Activated T-helper 1 cell treated with anti-CD3 and anti-CD28 coated beads, Interleukin-12 subunit alpha, Interleukin-12 subunit beta, Interleukin-2, Interleukin-4 antibody, amounts not matched to agents 30 ng/mL and 10 ng/mL and 1 ng/mL, durations not matched to agents 14 hours and 24 hours and 36 hours (primary cell): ENCODE measurements at regions of chr19 and their contacts with region 1.

Region 1: DNA sequence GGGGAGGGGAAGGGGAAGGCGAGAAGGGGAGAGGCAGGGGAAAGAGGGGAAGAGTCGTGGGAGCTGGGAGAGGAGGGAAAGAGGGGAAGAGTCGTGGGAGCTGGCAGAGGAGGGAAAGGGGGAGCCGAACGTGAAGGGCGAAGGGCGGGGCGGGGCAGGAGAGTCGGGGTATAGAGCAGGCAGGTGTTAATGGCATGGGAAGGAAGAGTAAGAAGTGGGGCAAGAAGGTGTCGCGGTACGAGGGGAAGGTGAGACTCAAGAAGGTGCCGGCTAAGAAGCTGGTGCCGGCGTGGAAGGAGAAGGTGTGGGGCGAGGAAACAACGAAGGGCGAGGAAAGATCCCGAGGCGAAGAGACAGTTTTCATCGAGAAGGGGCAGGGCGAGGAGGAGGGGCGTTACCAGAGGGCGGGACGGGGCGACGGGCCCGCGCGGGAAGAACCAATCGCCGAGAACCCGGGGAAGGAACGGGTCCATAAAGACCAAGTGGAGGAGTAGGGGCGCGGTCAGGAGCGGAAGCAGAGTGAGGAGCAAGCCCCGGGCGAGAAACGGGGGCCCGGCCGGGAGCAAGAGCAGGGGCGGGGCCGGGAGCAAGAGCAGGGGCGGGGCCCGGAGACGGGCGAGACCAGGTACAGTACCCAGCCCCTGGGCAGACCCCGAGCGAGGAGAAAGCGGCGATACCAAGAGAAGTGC is 463 bp downstream of the CATSPERG start:
- DNase-seq: peak; percentile 94
- H3K4me3 Mint-ChIP-seq: peak overlapping the region; percentile 94
- H3K27ac Mint-ChIP-seq: peak overlapping the region; percentile 99
- H3K4me1 Mint-ChIP-seq: peaks cover 6% of the 10 kb centered on the region
- H3K27me3 Mint-ChIP-seq: no peaks in the 10 kb centered on the region

Region 2: DNA sequence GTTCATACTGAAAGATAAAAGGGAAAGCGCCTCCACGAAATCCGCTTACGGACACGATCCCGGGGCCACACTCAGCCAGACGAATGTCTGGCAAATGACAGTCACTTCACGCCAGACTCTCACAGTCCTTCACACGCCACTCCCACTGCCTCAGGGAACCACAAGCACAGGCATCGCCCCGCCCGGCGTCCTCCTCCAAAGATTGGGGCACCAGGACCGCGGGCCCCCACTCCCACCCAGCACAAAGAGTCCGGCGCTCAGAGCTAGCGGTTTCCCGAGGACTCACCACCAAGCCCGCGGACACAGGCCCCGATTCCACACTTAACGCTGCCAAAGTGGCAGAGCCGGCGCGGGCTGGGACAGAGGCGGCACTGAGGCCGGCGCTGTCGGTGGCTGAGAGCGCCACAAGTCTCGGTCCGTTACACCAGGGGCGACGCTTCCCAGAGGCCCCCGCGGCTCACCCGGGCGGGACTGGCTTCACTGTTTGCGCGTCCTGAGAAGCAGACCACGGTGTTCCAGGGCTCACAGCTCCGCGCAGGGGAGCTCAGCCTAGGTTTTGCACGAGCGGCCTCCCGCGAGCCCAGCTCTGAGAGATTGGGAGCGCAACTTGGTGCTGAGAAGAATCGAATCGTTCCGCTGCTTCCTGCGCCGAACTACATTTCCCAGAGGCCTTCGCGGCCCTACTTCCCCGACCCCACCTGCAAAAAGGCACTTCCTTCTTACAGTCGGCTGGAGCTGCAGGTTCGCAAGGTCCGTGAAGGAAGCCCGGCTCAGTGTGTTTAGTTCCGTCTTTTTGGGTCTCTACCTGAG is 869.1 kb before region 1 on chr19 and contains the start of gene ZNF569:
- intact Hi-C with region 1: loop called (anchors 10 kb)
- DNase-seq: peak; percentile 85
- H3K4me3 Mint-ChIP-seq: peak within 1 kb of the TSS; percentile 92
- H3K27ac Mint-ChIP-seq: peak within 1 kb of the TSS; percentile 93
- H3K4me1 Mint-ChIP-seq: peaks cover 27% of the 10 kb centered on the region
- H3K27me3 Mint-ChIP-seq: no peaks in the 10 kb centered on the region
- total RNA-seq, gene ZNF569: 2.7 and 3.7 TPM in 2 replicates

Region 3: DNA sequence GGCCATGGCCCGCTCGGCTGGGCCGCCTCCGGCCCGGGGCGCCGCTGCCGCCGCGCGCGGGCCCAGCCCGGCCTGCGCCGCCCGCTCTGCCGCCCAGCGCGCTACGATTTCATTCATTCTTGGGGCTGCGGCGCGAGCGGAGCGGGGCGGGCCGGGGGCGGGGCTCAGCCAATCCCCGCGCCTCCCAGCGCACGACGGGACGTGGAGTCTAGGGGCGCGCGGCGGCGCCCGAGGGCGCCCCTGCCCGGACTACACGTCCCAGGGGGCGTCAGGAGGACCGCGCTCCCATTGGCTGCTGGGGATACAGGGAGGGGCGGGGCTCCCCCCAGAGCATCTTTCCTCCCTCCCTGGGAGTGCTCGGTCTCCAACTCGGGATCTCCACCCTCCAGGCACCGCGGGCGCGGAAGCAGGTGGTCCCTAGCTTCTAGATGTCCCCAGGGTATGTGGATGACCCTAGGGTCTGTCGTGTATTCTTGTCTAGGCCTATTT is 106.5 kb before region 1 on chr19:
- intact Hi-C with region 1: loop called (anchors 1 kb)
- DNase-seq: peak; percentile 68
- H3K4me3 Mint-ChIP-seq: no peak overlapping the region
- H3K27ac Mint-ChIP-seq: no peak overlapping the region
- H3K4me1 Mint-ChIP-seq: peaks cover 20% of the 10 kb centered on the region
- H3K27me3 Mint-ChIP-seq: peaks cover 51% of the 10 kb centered on the region

Region 4: GRCh38 chr19:38263689-38264485 is 72.2 kb before region 1 on chr19:
- intact Hi-C with region 1: loop called (anchors 1 kb)
- DNase-seq: peak; percentile 74
- H3K4me3 Mint-ChIP-seq: peak overlapping the region; percentile 90
- H3K27ac Mint-ChIP-seq: peak overlapping the region; percentile 98
- H3K4me1 Mint-ChIP-seq: peaks cover 51% of the 10 kb centered on the region
- H3K27me3 Mint-ChIP-seq: no peaks in the 10 kb centered on the region

Region 5: GRCh38 chr19:38351865-38352395 is 15.8 kb after region 1 on chr19:
- intact Hi-C with region 1: no loop called
- DNase-seq: no peak
- H3K4me3 Mint-ChIP-seq: no peak overlapping the region
- H3K27ac Mint-ChIP-seq: no peak overlapping the region
- H3K4me1 Mint-ChIP-seq: no peaks in the 10 kb centered on the region
- H3K27me3 Mint-ChIP-seq: peaks cover 17% of the 10 kb centered on the region

Region 6: DNA sequence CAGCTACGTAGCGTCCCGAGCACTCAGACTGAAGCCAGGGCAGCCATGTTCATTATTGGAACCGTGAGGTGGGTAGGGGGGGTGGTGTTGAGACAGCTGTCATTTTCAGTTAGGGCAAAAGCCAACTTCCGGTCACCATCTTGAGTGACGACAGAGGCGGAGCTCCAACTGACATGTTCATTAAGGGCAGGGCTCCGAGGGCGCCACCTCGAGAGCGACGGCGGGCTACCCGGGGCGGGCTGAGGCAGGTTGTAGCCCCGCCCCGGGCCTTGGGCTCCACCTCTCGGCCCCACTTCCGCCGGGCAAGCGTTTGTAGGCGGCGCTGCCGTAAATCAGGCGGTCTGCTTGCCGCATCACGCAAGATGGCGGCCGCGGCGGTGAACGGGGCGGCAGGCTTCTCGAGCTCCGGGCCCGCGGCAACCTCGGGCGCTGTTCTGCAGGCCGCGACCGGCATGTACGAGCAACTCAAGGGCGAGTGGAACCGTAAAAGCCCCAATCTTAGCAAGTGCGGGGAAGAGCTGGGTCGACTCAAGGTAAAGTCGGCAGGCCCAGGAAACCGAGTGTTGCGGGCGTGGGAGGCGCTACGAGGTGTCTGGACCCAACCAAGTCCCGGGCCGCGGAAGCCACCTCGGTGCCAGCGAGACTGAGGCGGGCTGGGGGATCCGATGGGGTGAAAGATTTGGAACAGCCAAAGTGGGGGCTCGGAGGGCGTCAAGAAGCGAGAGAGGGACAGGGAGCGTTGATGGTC is 38.5 kb after region 1 on chr19 and contains the start of gene PSMD8:
- intact Hi-C with region 1: loop called (anchors 1 kb)
- DNase-seq: peak; percentile 98
- H3K4me3 Mint-ChIP-seq: peak within 1 kb of the TSS; percentile 100
- H3K27ac Mint-ChIP-seq: peak within 1 kb of the TSS; percentile 99
- H3K4me1 Mint-ChIP-seq: peaks cover 31% of the 10 kb centered on the region
- H3K27me3 Mint-ChIP-seq: peaks cover 3% of the 10 kb centered on the region
- total RNA-seq, gene PSMD8: 292 and 298 TPM in 2 replicates

Region 7: GRCh38 chr19:38618590-38619360 is 282.7 kb after region 1 on chr19 and contains the start of gene EIF3K:
- intact Hi-C with region 1: loop called (anchors 1 kb)
- DNase-seq: peak; percentile 98
- H3K4me3 Mint-ChIP-seq: peak within 1 kb of the TSS; percentile 98
- H3K27ac Mint-ChIP-seq: peak within 1 kb of the TSS; percentile 84
- H3K4me1 Mint-ChIP-seq: peaks cover 32% of the 10 kb centered on the region
- H3K27me3 Mint-ChIP-seq: no peaks in the 10 kb centered on the region
- total RNA-seq, gene EIF3K: 309 and 326 TPM in 2 replicates

Region 8: GRCh38 chr19:38899447-38900219 is 563.5 kb after region 1 on chr19 and contains the starts of genes NFKBIB and SIRT2:
- intact Hi-C with region 1: loop called (anchors 1 kb)
- DNase-seq: peak; percentile 100
- H3K4me3 Mint-ChIP-seq: peak within 1 kb of the TSS; percentile 93
- H3K27ac Mint-ChIP-seq: peak within 1 kb of the TSS; percentile 94
- H3K4me1 Mint-ChIP-seq: peaks cover 42% of the 10 kb centered on the region
- H3K27me3 Mint-ChIP-seq: no peaks in the 10 kb centered on the region
- total RNA-seq, gene NFKBIB: 98.1 and 102 TPM in 2 replicates
- total RNA-seq, gene SIRT2: 28.3 and 28.7 TPM in 2 replicates

Region 9: DNA sequence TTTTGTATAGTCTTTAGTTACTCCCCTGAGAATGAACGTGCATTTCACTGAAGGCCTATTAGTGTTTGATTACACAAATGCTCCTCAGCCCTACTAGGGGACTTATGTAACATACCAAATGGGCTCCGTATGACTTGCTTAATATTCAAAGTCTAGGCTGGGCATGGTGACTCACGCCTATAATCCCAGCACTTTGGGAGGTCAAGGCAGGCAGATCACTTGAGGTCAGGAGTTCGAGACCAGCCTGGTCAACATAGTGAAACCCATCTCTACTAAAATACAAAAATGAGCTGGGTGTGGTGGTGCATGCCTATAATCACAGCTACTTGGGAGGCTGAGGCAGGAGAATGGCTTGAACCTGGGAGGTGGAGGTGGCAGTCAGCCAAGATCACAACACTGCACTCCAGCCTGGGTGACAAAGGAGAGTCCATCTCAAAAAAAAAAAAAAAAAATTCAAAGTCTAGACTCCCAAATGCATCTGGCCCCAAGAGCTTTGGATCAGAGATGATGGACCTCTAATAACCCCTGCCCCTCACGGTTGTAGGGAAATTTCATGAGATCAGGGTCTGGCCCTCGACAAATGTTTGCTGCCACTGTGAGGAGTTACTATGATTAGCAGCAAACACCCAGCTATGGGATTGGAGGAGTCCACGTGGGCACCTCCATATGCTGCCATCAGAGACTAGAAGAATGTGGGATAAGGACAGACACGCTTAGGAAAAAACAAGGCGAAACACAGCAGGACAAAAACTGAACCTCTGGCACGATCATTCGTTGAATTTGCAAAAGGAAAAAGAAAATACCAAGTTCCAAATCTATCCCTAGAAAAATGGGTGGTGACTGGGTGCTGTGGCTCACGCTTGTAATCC is 634.8 kb after region 1 on chr19:
- intact Hi-C with region 1: no loop called
- DNase-seq: no peak
- H3K4me3 Mint-ChIP-seq: no peak overlapping the region
- H3K27ac Mint-ChIP-seq: no peak overlapping the region
- H3K4me1 Mint-ChIP-seq: peaks cover under 1% of the 10 kb centered on the region
- H3K27me3 Mint-ChIP-seq: peaks cover 28% of the 10 kb centered on the region